ENCODE measurements at regions of chr6 and their contacts with region 1.

Region 1: DNA sequence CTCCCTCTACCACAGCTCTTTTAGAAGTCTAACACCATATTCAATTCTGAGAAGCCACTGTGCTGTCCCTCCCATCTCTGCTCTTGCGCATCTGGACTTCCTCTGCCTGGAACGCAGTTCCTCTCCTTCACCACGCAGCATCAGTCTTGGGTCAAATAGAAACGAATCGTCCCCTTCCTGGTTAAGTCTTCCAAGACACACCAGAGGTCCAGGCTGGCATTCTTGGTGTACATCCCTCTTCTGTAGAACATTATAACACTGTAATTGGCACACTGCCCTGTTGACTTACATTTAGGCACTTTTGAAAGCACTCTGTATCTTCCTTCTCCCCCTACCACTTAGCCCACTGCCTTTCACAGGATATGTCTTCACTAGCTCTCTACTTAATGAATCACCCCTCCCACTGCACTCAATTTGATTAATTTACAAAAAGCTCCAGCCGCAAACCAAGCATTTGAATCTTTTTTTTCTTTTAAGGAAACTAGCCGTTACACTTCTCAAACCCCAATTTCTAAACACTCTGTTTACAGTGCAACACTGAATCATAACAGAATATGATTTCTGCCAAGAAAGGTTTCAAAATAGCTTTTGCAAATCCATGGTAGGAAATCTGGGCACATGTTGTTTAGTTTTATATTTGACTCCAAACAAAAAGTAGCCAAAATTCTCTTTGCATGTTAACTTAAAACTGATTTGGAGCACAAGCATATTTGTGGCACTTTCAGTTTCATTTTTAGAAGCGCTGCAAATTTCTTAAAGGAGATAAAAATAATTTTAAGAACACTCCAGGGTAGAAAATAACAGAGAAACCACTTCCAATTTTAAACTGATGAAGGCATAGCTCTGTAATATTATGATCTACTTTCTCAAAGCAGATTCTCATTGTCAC is 140.7 kb upstream of the CARMIL1 start:
- DNase-seq: peak; percentile 92
- H3K4me3 Mint-ChIP-seq: peak overlapping the region; percentile 92
- H3K27ac Mint-ChIP-seq: peak overlapping the region; percentile 98
- H3K4me1 Mint-ChIP-seq: peaks cover 33% of the 10 kb centered on the region
- H3K27me3 Mint-ChIP-seq: no peaks in the 10 kb centered on the region

Region 2: GRCh38 chr6:24547243-24547642 is 591.2 kb before region 1 on chr6:
- intact Hi-C with region 1: no loop called
- DNase-seq: peak; percentile 77
- H3K4me3 Mint-ChIP-seq: no peak overlapping the region
- H3K27ac Mint-ChIP-seq: no peak overlapping the region
- H3K4me1 Mint-ChIP-seq: peaks cover 6% of the 10 kb centered on the region
- H3K27me3 Mint-ChIP-seq: peaks cover 21% of the 10 kb centered on the region

Region 3: DNA sequence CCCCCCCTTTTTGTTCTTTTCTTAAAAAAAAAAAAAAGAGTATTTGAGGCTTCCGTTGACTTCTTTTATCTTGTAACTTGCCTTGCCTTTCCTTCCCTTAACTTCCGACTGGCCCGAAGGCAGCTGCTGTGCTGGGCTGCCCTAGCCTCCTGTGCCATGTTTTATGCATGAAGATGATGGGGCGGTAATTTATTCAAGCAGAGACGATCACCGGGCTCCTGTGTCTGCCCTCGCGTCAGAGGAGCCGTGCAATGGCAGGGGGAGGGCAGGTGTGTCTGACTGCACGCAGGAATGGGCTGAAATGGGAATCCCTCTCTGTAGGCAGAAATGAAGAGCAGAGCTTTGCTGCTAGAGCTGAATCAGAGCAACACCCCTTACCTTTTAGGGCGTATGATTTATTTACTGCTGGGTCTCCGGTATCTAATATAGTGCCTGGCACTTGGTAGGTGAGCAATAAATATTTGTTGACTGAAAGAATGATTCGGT is 96.4 kb before region 1 on chr6:
- intact Hi-C with region 1: loop called (anchors 2 kb)
- DNase-seq: peak; percentile 80
- H3K4me3 Mint-ChIP-seq: peak overlapping the region; percentile 94
- H3K27ac Mint-ChIP-seq: peak overlapping the region; percentile 97
- H3K4me1 Mint-ChIP-seq: peaks cover 56% of the 10 kb centered on the region
- H3K27me3 Mint-ChIP-seq: no peaks in the 10 kb centered on the region

Region 4: DNA sequence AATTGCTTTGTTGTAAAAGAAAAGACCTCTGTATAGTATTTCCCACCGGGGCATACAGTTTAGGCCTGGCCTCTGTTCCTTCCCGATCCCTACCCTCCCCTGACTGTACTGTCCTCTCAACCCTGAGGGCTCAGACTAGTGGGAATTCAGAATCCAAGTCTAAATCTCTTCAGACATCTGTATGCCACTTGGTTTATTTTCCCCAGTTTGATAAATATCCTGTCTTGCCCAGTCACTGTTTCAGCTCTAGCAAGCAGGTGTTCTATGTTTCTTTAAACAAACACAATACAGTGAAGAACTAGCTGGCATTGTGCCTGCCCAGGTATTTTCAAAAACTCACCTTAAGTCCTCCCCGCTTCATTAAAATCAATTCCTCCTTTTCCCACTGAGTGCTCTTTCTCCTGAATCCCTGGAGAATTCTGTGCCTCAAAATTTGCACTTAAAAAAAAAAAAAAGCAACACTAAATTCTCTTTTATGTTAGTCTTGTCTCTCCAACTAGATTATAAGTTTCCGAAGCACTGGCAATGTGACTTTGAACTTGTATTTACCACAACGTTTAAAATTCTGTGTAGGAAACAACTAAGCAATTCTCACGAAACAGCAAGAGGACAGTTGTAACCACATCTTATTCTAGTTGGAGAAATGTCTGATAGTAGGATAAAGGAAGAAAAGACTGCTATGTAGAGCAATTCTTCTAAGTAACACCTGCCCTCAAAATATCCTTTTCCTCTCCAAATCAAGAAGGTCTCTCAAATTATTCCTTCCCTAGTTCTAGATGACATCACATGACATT is 28.7 kb after region 1 on chr6:
- intact Hi-C with region 1: loop called (anchors 1 kb)
- DNase-seq: no peak
- H3K4me3 Mint-ChIP-seq: peak overlapping the region; percentile 86
- H3K27ac Mint-ChIP-seq: peak overlapping the region; percentile 92
- H3K4me1 Mint-ChIP-seq: peaks cover 67% of the 10 kb centered on the region
- H3K27me3 Mint-ChIP-seq: no peaks in the 10 kb centered on the region

Region 5: DNA sequence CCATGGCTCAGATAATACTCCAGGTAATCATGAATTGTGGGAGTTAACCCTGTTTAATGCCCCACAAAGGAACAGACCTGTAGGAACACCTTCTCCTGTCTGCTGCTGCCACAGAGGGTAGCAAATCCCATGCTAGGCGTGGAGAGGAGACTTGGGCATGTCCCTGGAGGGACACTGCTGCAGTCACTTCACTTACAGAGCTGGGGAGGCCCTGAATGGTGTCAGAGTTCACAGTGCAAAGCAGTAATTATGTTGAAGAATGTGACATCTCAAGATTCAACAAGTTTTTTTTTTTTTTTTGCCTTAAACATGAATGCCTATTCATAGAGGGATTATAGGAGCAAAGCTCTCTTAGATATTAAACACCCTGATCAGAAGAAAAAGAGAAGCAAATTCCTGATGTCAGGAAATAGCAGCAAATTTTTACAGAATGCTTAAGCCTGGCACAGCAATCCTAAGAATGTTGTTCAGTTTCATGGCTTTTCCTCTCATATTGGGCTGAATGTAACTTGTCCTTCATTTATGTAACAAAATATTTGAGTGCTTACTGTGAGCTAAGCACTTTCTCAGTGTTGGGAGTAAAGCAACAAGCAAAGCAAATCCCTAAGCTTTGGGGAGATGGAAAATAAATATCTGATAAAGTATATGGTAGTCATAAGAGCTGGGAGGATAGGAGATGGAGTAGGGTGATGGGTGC is 185.7 kb after region 1 on chr6:
- intact Hi-C with region 1: no loop called
- DNase-seq: no peak
- H3K4me3 Mint-ChIP-seq: no peak overlapping the region
- H3K27ac Mint-ChIP-seq: no peak overlapping the region
- H3K4me1 Mint-ChIP-seq: no peaks in the 10 kb centered on the region
- H3K27me3 Mint-ChIP-seq: no peaks in the 10 kb centered on the region

Region 6: GRCh38 chr6:25369433-25370181 is 231.1 kb after region 1 on chr6:
- intact Hi-C with region 1: loop called (anchors 10 kb)
- DNase-seq: peak; percentile 73
- H3K4me3 Mint-ChIP-seq: peak overlapping the region; percentile 76
- H3K27ac Mint-ChIP-seq: peak overlapping the region; percentile 88
- H3K4me1 Mint-ChIP-seq: peaks cover 65% of the 10 kb centered on the region
- H3K27me3 Mint-ChIP-seq: no peaks in the 10 kb centered on the region

Measured in activated CD4-positive, alpha-beta T cell treated with anti-CD3 and anti-CD28 coated beads, Interleukin-2, amount 10 ng/mL, durations not matched to agents 24 days and 14 days (primary cell).